Gastrocnemius medialis (tissue), 4 donors: ENCODE measurements at regions of chr17 and their contacts with region 1.

Region 1: GRCh38 chr17:27323524-27324206 is 29.8 kb downstream of the WSB1 start:
- DNase-seq: peak; percentile 28 to 65
- ATAC-seq: no peak
- H3K4me3 ChIP-seq: no peak overlapping the region
- H3K27ac ChIP-seq: peak overlapping the region; percentile 35 to 53 (median 44)
- H3K4me1 ChIP-seq: peaks cover 31 to 38% of the 10 kb centered on the region in 2 donors
- H3K27me3 ChIP-seq: no peaks in the 10 kb centered on the region
- CTCF ChIP-seq: no peak
- POLR2A ChIP-seq: no peak

Region 2: DNA sequence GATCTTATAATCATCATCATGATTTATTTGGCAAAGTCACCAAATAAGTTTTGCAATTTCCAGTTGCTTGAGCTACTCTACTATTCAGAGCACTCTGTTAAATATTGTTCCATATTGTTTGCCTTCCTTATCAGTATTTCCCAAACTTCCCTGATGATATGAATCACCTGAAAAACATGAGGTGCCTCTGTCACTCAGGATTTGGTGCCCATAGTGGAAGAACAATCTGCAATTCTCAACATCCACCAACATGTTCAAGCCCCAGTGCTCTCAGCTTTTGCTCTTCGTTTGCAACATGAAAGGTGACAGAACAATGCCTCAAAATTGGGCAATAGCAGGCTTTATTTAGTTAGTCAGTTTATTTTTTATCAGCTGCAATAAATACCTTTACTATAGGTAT is 58.3 kb before region 1 on chr17:
- in situ Hi-C with region 1: loop called in 1 of 4 experiments (anchors 10 kb)
- intact Hi-C with region 1: no loop called
- DNase-seq: no peak
- ATAC-seq: peak; percentile 24 to 80
- H3K4me3 ChIP-seq: no peak overlapping the region
- H3K27ac ChIP-seq: peak overlapping the region in 3 of 4 donors; percentile 30 to 53 (median 46)
- H3K4me1 ChIP-seq: no peaks in the 10 kb centered on the region
- H3K27me3 ChIP-seq: no peaks in the 10 kb centered on the region
- CTCF ChIP-seq: no peak
- POLR2A ChIP-seq: no peak